ENCODE measurements at regions of chr2 and their contacts with region 1.

Region 1: DNA sequence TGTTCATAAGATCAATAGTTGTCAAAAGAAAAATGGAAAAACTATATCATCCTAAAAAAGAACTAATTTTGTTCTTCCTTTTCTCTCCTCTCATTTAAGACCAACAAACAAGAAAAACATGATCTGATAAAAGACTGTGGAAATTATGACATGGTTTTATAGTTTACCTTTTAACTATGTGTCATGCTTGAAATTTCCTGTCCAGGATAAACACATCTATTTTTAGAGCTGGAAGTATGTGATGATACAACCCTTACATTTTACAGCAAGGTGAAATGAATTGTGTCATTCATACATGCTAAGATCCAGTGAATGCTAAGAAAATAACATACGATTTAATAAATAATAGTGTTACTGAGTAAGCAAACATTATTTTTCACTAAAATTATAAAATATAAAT is 89.9 kb downstream of the GULP1 start:
- DNase-seq: peak; percentile 89
- ATAC-seq: peak; percentile 94
- H3K4me3 ChIP-seq: no peak overlapping the region
- H3K27ac ChIP-seq: peak overlapping the region; percentile 74
- H3K4me1 ChIP-seq: peaks cover 29% of the 10 kb centered on the region
- H3K27me3 ChIP-seq: no peaks in the 10 kb centered on the region
- CTCF ChIP-seq: no peak

Region 2: GRCh38 chr2:188199716-188200131 is 181.9 kb before region 1 on chr2:
- CTCF ChIA-PET with region 1: no interaction called
- POLR2A ChIA-PET with region 1: no interaction called
- intact Hi-C with region 1: loop called (anchors 10 kb)
- DNase-seq: peak; percentile 83
- ATAC-seq: peak; percentile 98
- H3K4me3 ChIP-seq: no peak overlapping the region
- H3K27ac ChIP-seq: peak overlapping the region; percentile 55
- H3K4me1 ChIP-seq: peaks cover 9% of the 10 kb centered on the region
- H3K27me3 ChIP-seq: no peaks in the 10 kb centered on the region
- CTCF ChIP-seq: no peak

Region 3: GRCh38 chr2:188322569-188323551 is 58.8 kb before region 1 on chr2:
- CTCF ChIA-PET with region 1: no interaction called
- POLR2A ChIA-PET with region 1: no interaction called
- intact Hi-C with region 1: loop called (anchors 2 kb)
- DNase-seq: peak; percentile 75
- ATAC-seq: peak; percentile 84
- H3K4me3 ChIP-seq: peak overlapping the region; percentile 51
- H3K27ac ChIP-seq: peak overlapping the region; percentile 99
- H3K4me1 ChIP-seq: peaks cover 39% of the 10 kb centered on the region
- H3K27me3 ChIP-seq: no peaks in the 10 kb centered on the region
- CTCF ChIP-seq: no peak

Region 4: GRCh38 chr2:188506843-188507242 is 125.2 kb after region 1 on chr2:
- CTCF ChIA-PET with region 1: no interaction called
- POLR2A ChIA-PET with region 1: no interaction called
- intact Hi-C with region 1: loop called (anchors 5 kb)
- DNase-seq: no peak
- ATAC-seq: no peak
- H3K4me3 ChIP-seq: no peak overlapping the region
- H3K27ac ChIP-seq: no peak overlapping the region
- H3K4me1 ChIP-seq: no peaks in the 10 kb centered on the region
- H3K27me3 ChIP-seq: no peaks in the 10 kb centered on the region
- CTCF ChIP-seq: no peak

Measured in PC-3 (cell line).